ENCODE measurements at regions of chr20 and their contacts with region 1.

Region 1: GRCh38 chr20:35664544-35665221 is at the starts of genes CPNE1 and RBM12:
- DNase-seq: peak; percentile 94
- ATAC-seq: peak; percentile 98
- total RNA-seq, gene CPNE1: 60.6 TPM
- total RNA-seq, gene RBM12: 45.3 TPM

Region 2: GRCh38 chr20:35619196-35620095 is 45.2 kb before region 1 on chr20:
- intact Hi-C with region 1: loop called (anchors 5 kb)
- DNase-seq: peak; percentile 88
- ATAC-seq: peak; percentile 48

Region 3: GRCh38 chr20:35820715-35821114 is 156.0 kb after region 1 on chr20:
- intact Hi-C with region 1: no loop called
- DNase-seq: no peak
- ATAC-seq: peak; percentile 70